Sigmoid colon (tissue), 7 donors: ENCODE measurements at regions of chr7 and their contacts with region 1.

Region 1: GRCh38 chr7:153524070-153524601 is 528.1 kb upstream of the DPP6 start:
- DNase-seq: peak; percentile 96
- H3K4me3 ChIP-seq: peak overlapping the region in 2 of 4 donors; percentile 1 to 2
- H3K27ac ChIP-seq: peak overlapping the region; percentile 81 to 88 (median 86)
- H3K4me1 ChIP-seq: peaks cover 0 to 62% (median 48%) of the 10 kb centered on the region in 4 donors
- H3K27me3 ChIP-seq: no peaks in the 10 kb centered on the region
- CTCF ChIP-seq: no peak
- EP300 ChIP-seq: peak; percentile 77 to 97 (median 92)
- POLR2A ChIP-seq: no peak

Region 2: DNA sequence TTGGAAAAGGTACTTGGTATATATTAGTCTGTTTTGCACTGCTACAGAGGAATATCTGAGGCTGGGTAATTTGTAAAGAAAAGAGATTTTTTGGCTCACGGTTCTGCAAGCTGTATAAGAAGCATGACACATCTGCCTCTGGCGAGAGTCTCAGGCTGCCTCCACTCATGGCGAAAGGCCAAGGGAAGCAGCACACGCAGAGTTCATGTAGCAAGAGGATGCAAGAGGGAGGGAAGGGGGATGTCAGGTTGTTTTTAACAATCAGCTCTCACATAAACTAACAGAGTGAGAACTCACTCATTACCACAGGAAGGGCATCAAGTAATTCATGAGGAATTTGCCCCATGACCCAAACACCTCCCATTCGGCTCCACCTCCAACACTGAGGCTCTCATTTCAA is 43.3 kb after region 1 on chr7:
- intact Hi-C with region 1: loop called (anchors 5 kb)
- DNase-seq: peak; percentile 94
- H3K4me3 ChIP-seq: no peak overlapping the region
- H3K27ac ChIP-seq: peak overlapping the region in 3 of 4 donors; percentile 51 to 61 (median 61)
- H3K4me1 ChIP-seq: peaks cover 0 to 45% (median 31%) of the 10 kb centered on the region in 4 donors
- H3K27me3 ChIP-seq: no peaks in the 10 kb centered on the region
- CTCF ChIP-seq: no peak
- EP300 ChIP-seq: no peak
- POLR2A ChIP-seq: no peak

Region 3: DNA sequence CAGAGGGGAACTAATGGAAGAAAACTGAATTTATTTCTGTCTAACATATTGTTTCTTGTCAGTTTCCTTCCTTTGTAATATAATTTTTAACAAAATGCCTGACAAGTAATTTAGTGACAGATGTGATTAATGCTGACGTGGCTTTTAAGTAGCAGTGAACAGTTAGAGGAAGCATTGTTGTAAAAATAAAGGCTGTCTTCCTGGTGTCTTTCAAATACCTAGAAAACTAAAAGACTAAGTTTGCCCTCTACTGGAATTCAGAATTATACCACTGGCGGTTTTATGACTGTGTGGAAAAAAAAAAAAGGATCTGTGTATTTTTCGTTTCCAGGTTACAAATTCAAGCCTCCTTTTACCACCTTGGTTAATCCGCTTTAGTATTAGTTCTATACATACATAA is 311.0 kb after region 1 on chr7:
- intact Hi-C with region 1: loop called (anchors 5 kb)
- DNase-seq: no peak
- H3K4me3 ChIP-seq: no peak overlapping the region
- H3K27ac ChIP-seq: peak overlapping the region; percentile 50 to 71 (median 63)
- H3K4me1 ChIP-seq: peaks cover 0 to 41% (median 16%) of the 10 kb centered on the region in 4 donors
- H3K27me3 ChIP-seq: no peaks in the 10 kb centered on the region
- CTCF ChIP-seq: no peak
- EP300 ChIP-seq: no peak
- POLR2A ChIP-seq: no peak